WTC11 (cell line): ENCODE measurements at regions of chr12 and their contacts with region 1.

Region 1: DNA sequence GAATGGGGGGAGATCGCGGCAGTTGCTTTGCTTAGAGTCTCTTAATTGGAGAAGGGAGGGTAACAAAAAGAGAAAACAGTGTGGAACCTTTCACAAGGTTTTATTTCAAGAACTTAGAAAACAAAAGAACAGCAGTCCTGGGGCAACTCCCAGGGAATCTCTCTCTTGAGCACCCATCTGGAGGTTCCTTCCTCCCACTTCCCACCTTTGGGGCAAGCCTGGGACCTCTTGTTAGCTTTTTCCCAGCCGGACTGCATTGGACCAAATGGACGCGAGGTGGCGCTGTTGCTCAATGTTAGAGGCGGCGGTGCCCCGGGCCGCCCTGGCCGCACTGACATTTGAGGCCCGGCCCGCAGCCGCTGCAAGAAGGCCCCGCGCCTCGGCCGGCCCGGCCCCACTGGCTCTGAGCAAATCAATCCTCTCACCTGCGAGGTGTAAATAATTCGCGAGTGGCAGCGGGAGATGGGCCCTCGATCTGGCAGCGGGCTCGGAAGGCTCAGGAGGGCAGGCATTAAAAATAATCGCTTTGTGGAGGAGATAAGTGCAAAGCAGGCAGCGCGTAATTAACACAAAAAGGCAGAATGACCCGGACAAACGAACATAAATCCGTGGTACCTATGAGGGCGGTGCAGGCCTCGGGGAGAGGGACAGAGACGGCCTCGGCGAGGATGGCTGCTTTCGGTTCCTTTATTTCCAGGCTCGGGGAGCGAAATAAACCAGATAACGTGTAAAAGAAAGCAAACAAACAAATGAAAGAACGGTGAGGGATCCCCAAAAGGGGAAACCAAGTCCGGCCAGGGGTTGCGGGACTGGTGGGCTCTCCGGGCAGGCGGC is 2.7 kb upstream of the HOXC8 start:
- DNase-seq: peak; percentile 96
- ATAC-seq: peak; percentile 69
- H3K4me3 Mint-ChIP-seq: peak overlapping the region; percentile 34
- H3K27ac Mint-ChIP-seq: no peak overlapping the region
- H3K4me1 Mint-ChIP-seq: peaks cover 20% of the 10 kb centered on the region
- H3K27me3 Mint-ChIP-seq: peaks cover 100% of the 10 kb centered on the region
- CTCF ChIP-seq: peak; percentile 96

Region 2: GRCh38 chr12:53984901-53985709 is 21.0 kb before region 1 on chr12 and contains the start of gene HOXC10:
- CTCF ChIA-PET with region 1: interaction called, 43 read pairs
- POLR2A ChIA-PET with region 1: no interaction called
- DNase-seq: peak; percentile 95
- ATAC-seq: peak; percentile 56
- H3K4me3 Mint-ChIP-seq: peak within 1 kb of the TSS; percentile 52
- H3K27ac Mint-ChIP-seq: no peak within 1 kb of the TSS
- H3K4me1 Mint-ChIP-seq: peaks cover 34% of the 10 kb centered on the region
- H3K27me3 Mint-ChIP-seq: peaks cover 100% of the 10 kb centered on the region
- CTCF ChIP-seq: peak; percentile 76
- total RNA-seq, gene HOXC10: 0.09 TPM in 1 of 3 replicates, not detected in the others

Region 3: GRCh38 chr12:53995378-53996239 is 10.5 kb before region 1 on chr12:
- CTCF ChIA-PET with region 1: interaction called, 12 read pairs
- POLR2A ChIA-PET with region 1: no interaction called
- DNase-seq: peak; percentile 76
- ATAC-seq: peak; percentile 49
- H3K4me3 Mint-ChIP-seq: peak overlapping the region; percentile 56
- H3K27ac Mint-ChIP-seq: no peak overlapping the region
- H3K4me1 Mint-ChIP-seq: peaks cover 36% of the 10 kb centered on the region
- H3K27me3 Mint-ChIP-seq: peaks cover 100% of the 10 kb centered on the region
- CTCF ChIP-seq: no peak

Region 4: DNA sequence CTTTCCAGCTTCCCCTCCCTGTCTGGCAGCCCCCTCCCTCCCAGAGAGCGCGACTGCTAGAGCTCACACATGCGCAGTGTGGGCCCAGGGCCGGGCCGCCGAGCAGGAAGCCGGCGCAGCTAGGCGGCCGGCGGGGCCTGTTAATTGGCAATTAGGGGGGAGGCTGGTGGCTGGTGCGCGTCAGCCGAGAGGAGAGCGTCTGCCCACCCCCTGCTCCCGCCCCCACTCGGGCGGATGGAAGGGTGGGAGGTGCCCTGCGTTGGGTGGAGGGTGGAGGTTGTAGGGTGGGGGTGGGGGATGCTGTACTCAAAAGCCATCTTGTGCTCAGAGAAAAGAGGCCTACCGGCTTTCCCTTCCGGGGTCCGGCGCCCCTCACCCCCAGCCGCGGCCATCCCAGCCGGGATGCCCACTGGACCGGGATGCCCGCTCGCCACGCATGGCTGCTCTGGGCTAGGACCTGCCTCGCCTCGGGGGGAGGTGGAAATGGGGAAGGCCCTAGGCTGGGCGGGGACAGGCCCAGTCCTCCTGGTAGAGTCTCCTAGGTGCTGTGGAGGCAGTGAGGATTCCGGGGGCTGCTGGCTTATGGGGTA is 11.9 kb after region 1 on chr12:
- CTCF ChIA-PET with region 1: interaction called, 40 read pairs
- POLR2A ChIA-PET with region 1: no interaction called
- DNase-seq: peak; percentile 83
- ATAC-seq: peak; percentile 57
- H3K4me3 Mint-ChIP-seq: peak overlapping the region; percentile 63
- H3K27ac Mint-ChIP-seq: no peak overlapping the region
- H3K4me1 Mint-ChIP-seq: peaks cover 26% of the 10 kb centered on the region
- H3K27me3 Mint-ChIP-seq: peaks cover 99% of the 10 kb centered on the region
- CTCF ChIP-seq: no peak

Region 5: GRCh38 chr12:54024127-54024526 is 18.1 kb after region 1 on chr12:
- CTCF ChIA-PET with region 1: interaction called, 11 read pairs
- POLR2A ChIA-PET with region 1: interaction called, 3 read pairs
- DNase-seq: no peak
- ATAC-seq: peak; percentile 55
- H3K4me3 Mint-ChIP-seq: no peak overlapping the region
- H3K27ac Mint-ChIP-seq: no peak overlapping the region
- H3K4me1 Mint-ChIP-seq: peaks cover 24% of the 10 kb centered on the region
- H3K27me3 Mint-ChIP-seq: peaks cover 100% of the 10 kb centered on the region
- CTCF ChIP-seq: no peak

Region 6: GRCh38 chr12:54191550-54192022 is 185.5 kb after region 1 on chr12:
- CTCF ChIA-PET with region 1: interaction called, 40 read pairs
- POLR2A ChIA-PET with region 1: no interaction called
- DNase-seq: peak; percentile 87
- ATAC-seq: peak; percentile 81
- H3K4me3 Mint-ChIP-seq: no peak overlapping the region
- H3K27ac Mint-ChIP-seq: no peak overlapping the region
- H3K4me1 Mint-ChIP-seq: peaks cover 18% of the 10 kb centered on the region
- H3K27me3 Mint-ChIP-seq: peaks cover 73% of the 10 kb centered on the region
- CTCF ChIP-seq: peak; percentile 84